ENCODE measurements at regions of chr20 and their contacts with region 1.

Region 1: DNA sequence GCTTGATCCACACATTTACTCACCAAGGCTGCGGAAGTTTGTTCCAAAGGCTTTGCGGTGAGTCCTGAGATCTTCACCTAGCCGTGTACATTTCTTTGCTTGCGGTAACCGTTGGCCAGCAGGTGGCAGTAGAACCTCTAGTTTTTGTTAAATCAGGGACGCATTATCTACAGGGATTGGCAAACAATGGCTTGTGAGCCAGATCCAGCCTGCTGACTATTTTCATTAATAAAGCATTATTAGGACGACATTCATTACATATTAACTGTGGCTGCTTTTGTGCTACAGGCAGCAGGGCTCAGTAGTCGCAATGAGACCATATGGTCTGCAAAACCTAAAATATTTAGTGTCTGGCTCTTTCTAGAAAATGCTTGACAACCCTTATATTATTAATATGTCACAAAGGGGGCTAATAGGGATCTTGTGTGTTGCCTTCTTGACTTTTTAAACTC is 174.1 kb downstream of the DOK5 start:
- DNase-seq: peak; percentile 85
- ATAC-seq: peak; percentile 95
- H3K4me3 ChIP-seq: no peak overlapping the region
- H3K27ac ChIP-seq: no peak overlapping the region
- H3K4me1 ChIP-seq: no peaks in the 10 kb centered on the region
- H3K27me3 ChIP-seq: peaks cover 0 to 23% of the 10 kb centered on the region in 2 experiments; a peak in 1 of 5 replicates
- CTCF ChIP-seq: peak; percentile 93
- EP300 ChIP-seq: no peak
- POLR2A ChIP-seq: no peak
- RAD21 ChIP-seq: peak; percentile 36; the same call in 1 of the 2 replicates

Region 2: GRCh38 chr20:54086483-54087039 is 563.0 kb before region 1 on chr20:
- CTCF ChIA-PET with region 1: no interaction called
- POLR2A ChIA-PET with region 1: no interaction called
- in situ Hi-C with region 1: loop called (anchors 5 kb)
- intact Hi-C with region 1: no loop called
- DNase-seq: no peak
- ATAC-seq: no peak; the same call in 2 of the 3 replicates
- H3K4me3 ChIP-seq: no peak overlapping the region
- H3K27ac ChIP-seq: no peak overlapping the region
- H3K4me1 ChIP-seq: peaks cover 31% of the 10 kb centered on the region
- H3K27me3 ChIP-seq: peaks cover 0 to 6% of the 10 kb centered on the region in 2 experiments; a peak in 2 of 5 replicates
- CTCF ChIP-seq: no peak
- EP300 ChIP-seq: no peak
- POLR2A ChIP-seq: no peak
- RAD21 ChIP-seq: no peak

Region 3: DNA sequence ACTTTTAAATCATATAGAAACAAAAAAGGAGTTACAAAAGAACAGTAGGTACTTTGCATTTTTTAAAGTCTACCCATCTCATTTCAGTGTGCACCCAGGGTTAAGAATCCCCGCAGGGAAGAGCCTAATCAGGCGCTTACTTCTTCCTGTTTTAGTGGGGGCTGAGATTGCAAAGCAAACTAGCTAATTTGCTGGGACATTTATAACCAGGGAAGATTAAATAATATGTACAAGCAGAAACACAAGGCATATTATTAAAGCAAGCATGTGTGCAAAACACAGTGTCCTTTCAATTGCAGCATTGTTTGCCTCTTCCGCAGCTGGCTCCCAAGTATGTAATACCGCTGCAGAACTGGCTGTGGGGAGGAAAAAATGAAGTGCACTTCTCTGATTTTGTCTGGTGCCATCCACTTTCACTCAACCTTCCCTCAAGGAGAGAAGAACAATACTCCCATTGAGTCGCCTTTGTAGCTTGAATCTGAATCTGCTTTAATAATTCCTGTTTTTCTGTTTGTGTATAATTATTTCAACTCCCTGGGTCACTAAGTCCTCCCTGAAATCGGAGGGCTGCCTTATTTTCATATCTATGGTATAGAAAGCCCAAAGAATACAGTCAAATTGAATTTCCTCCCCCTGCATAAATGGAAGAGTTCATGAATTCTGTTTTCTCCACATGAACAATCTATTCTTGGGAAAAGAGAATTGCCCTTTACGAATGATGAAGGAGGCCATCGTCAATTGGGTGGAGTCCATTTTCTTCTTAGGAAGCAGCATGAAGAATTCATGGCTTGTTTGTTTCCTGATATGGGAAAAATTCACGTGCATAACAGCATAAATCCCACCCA is 555.9 kb before region 1 on chr20:
- CTCF ChIA-PET with region 1: interaction called, 3 read pairs
- POLR2A ChIA-PET with region 1: no interaction called
- in situ Hi-C with region 1: loop called (anchors 5 kb)
- intact Hi-C with region 1: loop called (anchors 5 kb)
- DNase-seq: no peak
- ATAC-seq: no peak
- H3K4me3 ChIP-seq: no peak overlapping the region
- H3K27ac ChIP-seq: no peak overlapping the region
- H3K4me1 ChIP-seq: peaks cover 23% of the 10 kb centered on the region
- H3K27me3 ChIP-seq: peaks cover 0 to 6% of the 10 kb centered on the region in 2 experiments; a peak in 1 of 5 replicates
- CTCF ChIP-seq: no peak
- EP300 ChIP-seq: no peak
- POLR2A ChIP-seq: no peak
- RAD21 ChIP-seq: no peak

Region 4: DNA sequence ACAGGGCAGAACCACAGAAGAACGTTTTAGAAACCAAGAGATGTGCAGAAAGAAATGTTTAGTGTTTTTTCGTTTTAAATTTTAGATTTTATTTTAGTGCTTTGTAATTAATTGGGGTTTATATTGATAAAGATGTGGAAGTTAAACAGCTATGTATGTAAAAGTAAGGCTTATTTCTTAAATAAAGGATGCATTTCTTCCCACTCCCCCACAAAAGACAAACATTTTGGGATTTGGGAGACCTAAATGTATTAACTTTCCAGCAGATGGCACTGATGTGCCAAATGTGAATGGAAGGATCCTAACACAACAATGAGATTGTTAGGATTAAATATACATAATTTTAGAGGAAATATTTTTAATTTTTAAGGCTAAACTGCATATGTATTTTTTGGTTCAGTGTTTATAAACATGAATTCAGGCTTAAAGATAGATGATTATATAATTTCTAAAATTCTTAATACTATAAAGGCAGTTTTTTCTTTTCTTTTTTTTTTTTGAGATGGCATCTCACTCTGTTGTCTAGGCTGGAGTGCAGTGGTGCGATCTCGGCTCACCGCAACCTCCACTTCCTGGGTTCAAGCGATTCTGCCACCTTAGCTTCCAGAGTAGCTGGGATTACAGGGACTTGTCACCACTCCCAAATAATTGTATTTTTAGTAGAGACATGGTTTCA is 429.6 kb before region 1 on chr20:
- CTCF ChIA-PET with region 1: interaction called, 41 read pairs
- POLR2A ChIA-PET with region 1: no interaction called
- in situ Hi-C with region 1: loop called (anchors 5 kb)
- intact Hi-C with region 1: loop called (anchors 1 kb)
- DNase-seq: peak; percentile 61
- ATAC-seq: peak; percentile 31; the same call in 1 of the 3 replicates
- H3K4me3 ChIP-seq: no peak overlapping the region
- H3K27ac ChIP-seq: no peak overlapping the region
- H3K4me1 ChIP-seq: no peaks in the 10 kb centered on the region
- H3K27me3 ChIP-seq: no peaks in the 10 kb centered on the region
- CTCF ChIP-seq: peak; percentile 70
- EP300 ChIP-seq: no peak
- POLR2A ChIP-seq: no peak
- RAD21 ChIP-seq: peak; percentile 35; the same call in 1 of the 2 replicates

Region 5: DNA sequence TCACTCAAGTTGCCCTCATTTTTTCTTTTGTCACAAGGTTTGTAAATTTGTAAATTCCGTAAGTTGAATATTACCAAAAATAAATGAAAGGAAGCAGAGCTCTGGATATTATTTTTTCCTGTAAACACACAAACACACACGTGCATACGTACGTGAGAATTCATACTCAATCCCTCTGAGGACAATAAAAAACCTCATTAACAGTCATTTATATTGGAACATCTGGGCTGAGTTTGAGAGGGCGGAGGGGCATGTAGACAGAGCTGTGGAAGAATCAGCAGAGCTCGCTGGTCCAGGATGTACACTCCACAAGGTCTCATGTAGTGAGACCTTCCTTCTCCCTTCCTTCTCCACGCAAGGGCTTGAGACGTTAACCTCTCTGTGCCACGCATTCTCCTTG is 198.4 kb before region 1 on chr20:
- CTCF ChIA-PET with region 1: no interaction called
- POLR2A ChIA-PET with region 1: no interaction called
- in situ Hi-C with region 1: no loop called
- intact Hi-C with region 1: no loop called
- DNase-seq: no peak
- ATAC-seq: no peak
- H3K4me3 ChIP-seq: no peak overlapping the region
- H3K27ac ChIP-seq: no peak overlapping the region
- H3K4me1 ChIP-seq: no peaks in the 10 kb centered on the region
- H3K27me3 ChIP-seq: peaks cover 0 to 3% of the 10 kb centered on the region in 2 experiments; a peak in 1 of 5 replicates
- CTCF ChIP-seq: no peak
- EP300 ChIP-seq: no peak
- POLR2A ChIP-seq: no peak
- RAD21 ChIP-seq: no peak

Region 6: GRCh38 chr20:54479138-54479865 is 170.2 kb before region 1 on chr20:
- CTCF ChIA-PET with region 1: interaction called, 8 read pairs
- POLR2A ChIA-PET with region 1: no interaction called
- in situ Hi-C with region 1: no loop called
- intact Hi-C with region 1: loop called (anchors 2 kb)
- DNase-seq: peak; percentile 42
- ATAC-seq: peak; percentile 91
- H3K4me3 ChIP-seq: no peak overlapping the region
- H3K27ac ChIP-seq: no peak overlapping the region
- H3K4me1 ChIP-seq: no peaks in the 10 kb centered on the region
- H3K27me3 ChIP-seq: peaks cover 1 to 22% of the 10 kb centered on the region in 2 experiments; a peak in 4 of 5 replicates
- CTCF ChIP-seq: peak; percentile 46
- EP300 ChIP-seq: no peak
- POLR2A ChIP-seq: no peak
- RAD21 ChIP-seq: no peak